Endothelial cell of umbilical vein (primary cell): ENCODE measurements at regions of chr4 and their contacts with region 1.

Region 1: DNA sequence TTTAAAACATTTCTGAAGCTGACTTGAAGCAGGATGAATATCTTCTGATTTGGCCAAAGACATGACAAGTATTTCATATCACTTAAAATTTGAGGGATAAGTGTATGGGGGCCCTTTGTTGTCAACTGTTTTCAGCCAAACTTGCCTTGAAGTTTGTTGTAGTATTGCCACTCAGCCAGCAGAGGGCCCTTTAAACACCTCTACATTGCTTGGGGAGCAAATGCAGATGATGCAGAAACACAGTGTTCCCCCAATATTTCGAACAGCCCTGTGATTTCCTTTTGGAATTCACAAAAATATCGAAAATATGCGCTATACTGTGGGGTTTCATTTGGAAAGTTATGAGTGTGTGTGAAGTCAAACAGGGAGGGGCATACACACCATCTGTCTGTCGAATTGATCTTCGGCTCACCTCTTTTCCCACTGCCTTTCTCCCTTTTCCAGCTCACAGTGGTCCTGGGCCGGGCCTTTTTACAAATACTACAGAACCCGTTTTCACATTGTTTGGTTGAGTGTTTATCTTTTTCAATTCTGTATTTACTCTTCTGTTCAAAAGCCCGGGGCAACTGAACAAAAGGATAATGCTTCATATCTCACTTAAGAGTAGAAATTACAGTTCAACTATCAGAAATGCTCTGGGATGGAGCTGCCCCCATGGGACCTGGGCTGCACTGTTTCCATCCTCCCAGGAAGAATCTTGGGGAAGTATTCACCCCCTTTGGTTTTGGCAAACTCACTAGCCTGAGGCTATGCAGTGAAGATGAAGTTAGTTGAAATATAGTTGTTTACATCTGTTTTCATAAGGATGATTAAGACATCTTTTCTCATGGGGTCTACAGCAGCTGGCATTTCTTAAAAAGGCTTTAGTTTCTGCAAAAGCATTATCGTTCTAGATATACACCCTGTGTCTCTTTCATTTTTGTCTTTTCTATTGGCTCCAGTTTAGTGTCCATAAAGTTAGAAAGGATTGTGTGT is 137.6 kb downstream of the EGF start:
- DNase-seq: peak; percentile 46
- H3K4me3 ChIP-seq: no peak overlapping the region
- H3K27ac ChIP-seq: no peak overlapping the region
- H3K4me1 ChIP-seq: no peaks in the 10 kb centered on the region
- H3K27me3 ChIP-seq: no peaks in the 10 kb centered on the region
- CTCF ChIP-seq: peak; percentile 68 to 75
- POLR2A ChIP-seq: no peak

Region 2: DNA sequence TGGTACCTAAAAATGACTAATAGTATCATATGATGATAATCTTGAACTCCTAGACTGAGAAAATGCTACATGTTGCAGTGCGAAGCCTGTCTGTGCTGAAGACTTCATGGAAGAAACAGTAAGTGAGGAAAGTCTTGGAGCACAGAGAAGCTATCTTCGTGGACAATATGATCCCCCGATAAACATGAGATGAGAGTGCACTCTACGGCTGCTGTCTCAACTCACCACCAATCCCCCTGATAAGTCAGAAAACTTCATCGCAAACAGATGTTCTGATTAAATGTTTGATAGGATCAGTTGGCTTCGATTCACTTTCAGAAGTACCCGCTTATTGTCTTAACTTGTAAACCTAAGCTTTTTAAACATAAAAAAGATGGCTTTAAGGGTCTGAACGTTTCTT is 18.0 kb after region 1 on chr4:
- CTCF ChIA-PET with region 1: interaction called, 11 read pairs
- POLR2A ChIA-PET with region 1: no interaction called
- dilution Hi-C with region 1: no loop called
- intact Hi-C with region 1: no loop called
- DNase-seq: no peak
- H3K4me3 ChIP-seq: no peak overlapping the region
- H3K27ac ChIP-seq: no peak overlapping the region
- H3K4me1 ChIP-seq: no peaks in the 10 kb centered on the region
- H3K27me3 ChIP-seq: no peaks in the 10 kb centered on the region
- CTCF ChIP-seq: no peak
- POLR2A ChIP-seq: no peak

Region 3: GRCh38 chr4:110087070-110087708 is 37.0 kb after region 1 on chr4:
- CTCF ChIA-PET with region 1: interaction called, 11 read pairs
- POLR2A ChIA-PET with region 1: no interaction called
- dilution Hi-C with region 1: no loop called
- intact Hi-C with region 1: loop called (anchors 2 kb)
- DNase-seq: peak; percentile 91
- H3K4me3 ChIP-seq: no peak overlapping the region
- H3K27ac ChIP-seq: no peak overlapping the region
- H3K4me1 ChIP-seq: peaks cover 35% of the 10 kb centered on the region
- H3K27me3 ChIP-seq: no peaks in the 10 kb centered on the region
- CTCF ChIP-seq: no peak
- POLR2A ChIP-seq: no peak

Region 4: GRCh38 chr4:110196206-110196870 is 146.1 kb after region 1 on chr4:
- CTCF ChIA-PET with region 1: interaction called, 58 read pairs
- POLR2A ChIA-PET with region 1: no interaction called
- dilution Hi-C with region 1: no loop called
- intact Hi-C with region 1: loop called (anchors 1 kb)
- DNase-seq: peak; percentile 55
- H3K4me3 ChIP-seq: peak overlapping the region; percentile 78 to 95 (median 91)
- H3K27ac ChIP-seq: peak overlapping the region; percentile 46
- H3K4me1 ChIP-seq: peaks cover 23% of the 10 kb centered on the region
- H3K27me3 ChIP-seq: no peaks in the 10 kb centered on the region
- CTCF ChIP-seq: no peak
- POLR2A ChIP-seq: peak; percentile 20

Region 5: DNA sequence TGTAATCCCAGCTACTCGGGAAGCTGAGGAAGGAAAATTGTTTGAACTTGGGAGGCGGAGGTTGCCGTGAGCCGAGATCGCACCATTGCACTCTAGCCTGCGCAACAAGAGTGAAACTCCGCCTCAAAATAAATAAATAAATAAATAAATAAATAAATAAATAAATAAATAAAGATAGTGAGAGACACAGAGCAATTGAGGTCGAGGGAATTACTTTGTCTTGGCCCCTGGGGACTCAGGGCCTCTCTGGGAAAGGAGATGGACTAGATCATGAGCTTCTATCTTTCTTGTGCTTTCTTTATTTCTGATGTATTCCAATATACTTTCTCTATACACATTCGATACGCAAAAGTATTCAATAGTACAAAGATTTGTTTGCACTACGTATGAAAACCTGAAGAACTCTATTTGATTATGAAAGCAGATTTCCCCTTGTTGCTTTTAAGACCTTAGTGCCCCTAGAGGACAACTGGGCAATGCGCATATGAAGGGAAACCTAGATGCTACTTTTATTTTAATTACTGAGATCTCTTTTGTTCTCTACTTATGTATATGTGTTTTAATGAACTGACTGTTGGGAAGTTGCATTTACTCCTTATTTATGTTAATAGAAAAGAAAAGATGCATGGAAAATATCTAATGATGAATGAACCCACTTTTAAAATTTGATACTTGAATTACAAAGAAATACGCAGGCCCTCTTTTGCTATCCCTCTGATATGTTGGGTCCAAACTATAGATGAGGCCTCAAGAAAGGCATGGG is 160.9 kb after region 1 on chr4:
- CTCF ChIA-PET with region 1: interaction called, 47 read pairs
- POLR2A ChIA-PET with region 1: no interaction called
- dilution Hi-C with region 1: no loop called
- intact Hi-C with region 1: loop called (anchors 1 kb)
- DNase-seq: peak; percentile 46
- H3K4me3 ChIP-seq: no peak overlapping the region
- H3K27ac ChIP-seq: no peak overlapping the region
- H3K4me1 ChIP-seq: no peaks in the 10 kb centered on the region
- H3K27me3 ChIP-seq: peaks cover 0 to 3% of the 10 kb centered on the region in 2 experiments
- CTCF ChIP-seq: peak; percentile 59 to 69
- POLR2A ChIP-seq: no peak

Region 6: DNA sequence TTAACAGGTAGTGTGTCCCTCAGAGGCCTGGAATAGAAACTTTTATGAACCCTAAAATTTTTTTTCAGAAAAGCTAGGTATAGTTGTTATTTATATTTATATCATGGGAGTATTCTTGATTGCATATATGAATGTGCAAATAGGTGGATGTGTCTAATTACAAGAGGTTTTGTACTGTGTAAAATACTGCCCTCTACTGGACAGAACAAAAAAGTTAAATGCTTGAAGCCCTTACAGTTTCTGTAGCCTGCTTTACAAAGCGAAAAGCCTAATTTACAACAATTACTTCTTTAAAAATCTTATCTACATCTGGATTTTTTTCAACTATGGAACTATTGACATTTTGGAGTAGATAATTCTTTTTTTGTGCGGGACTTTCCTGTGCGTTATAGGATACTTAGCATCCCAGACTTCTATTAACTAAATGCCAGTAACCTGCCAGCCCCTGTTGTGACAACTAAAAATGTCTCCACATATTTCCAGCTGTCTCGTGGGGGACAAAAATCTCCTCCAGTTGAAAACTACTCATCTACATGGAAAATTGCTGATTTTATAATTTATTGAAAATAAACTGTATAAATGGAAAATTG is 460.8 kb after region 1 on chr4:
- CTCF ChIA-PET with region 1: interaction called, 14 read pairs
- POLR2A ChIA-PET with region 1: no interaction called
- dilution Hi-C with region 1: no loop called
- intact Hi-C with region 1: loop called (anchors 5 kb)
- DNase-seq: peak; percentile 57
- H3K4me3 ChIP-seq: no peak overlapping the region
- H3K27ac ChIP-seq: no peak overlapping the region
- H3K4me1 ChIP-seq: peaks cover 10% of the 10 kb centered on the region
- H3K27me3 ChIP-seq: no peaks in the 10 kb centered on the region
- CTCF ChIP-seq: peak; percentile 31 to 40
- POLR2A ChIP-seq: no peak